Head of caudate nucleus (tissue), 42 donors: ENCODE measurements at regions of chr10 and their contacts with region 1.

Region 1: DNA sequence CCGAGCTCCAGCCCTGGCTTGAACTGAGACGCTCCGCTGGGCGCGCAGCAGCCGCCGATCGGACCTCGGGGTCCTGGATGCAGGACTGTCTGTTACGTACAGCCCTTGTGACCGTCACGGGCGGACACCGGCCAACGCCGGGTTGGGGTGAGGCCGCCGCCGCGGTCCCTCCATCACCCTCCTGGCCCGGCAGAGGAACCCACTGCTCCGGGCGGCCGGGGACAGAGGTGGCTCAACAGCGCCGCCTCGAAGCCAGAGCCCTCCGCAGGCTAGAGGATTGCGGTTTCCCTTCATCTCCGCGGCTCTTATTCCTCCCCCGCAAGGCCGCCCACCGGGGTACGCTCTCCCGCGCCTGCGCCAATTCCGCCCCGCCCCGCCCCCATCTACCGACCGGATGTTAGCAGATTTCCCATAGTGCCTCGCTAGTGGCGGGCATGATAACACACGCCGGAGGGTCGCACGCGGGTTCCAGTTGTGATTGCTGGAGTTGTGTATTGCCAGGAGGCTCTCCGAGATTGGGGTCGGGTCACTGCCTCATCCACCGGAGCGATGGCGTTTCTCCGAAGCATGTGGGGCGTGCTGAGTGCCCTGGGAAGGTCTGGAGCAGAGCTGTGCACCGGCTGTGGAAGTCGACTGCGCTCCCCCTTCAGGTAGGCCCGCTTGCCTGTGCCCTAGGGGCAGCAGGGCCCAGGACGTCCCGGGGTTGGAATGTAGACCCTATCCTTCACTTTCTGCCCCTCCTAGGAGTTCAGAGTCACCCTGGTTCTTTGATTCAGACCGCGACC is at the start of gene TFAM:
- DNase-seq: peak; percentile 89 to 99 (median 95)

Region 2: GRCh38 chr10:58300676-58301075 is 84.5 kb before region 1 on chr10:
- intact Hi-C with region 1: loop called (anchors 5 kb)
- DNase-seq: no peak

Region 3: GRCh38 chr10:58334817-58335305 is 50.3 kb before region 1 on chr10 and contains the start of gene UBE2D1:
- intact Hi-C with region 1: loop called (anchors 10 kb)
- DNase-seq: peak; percentile 85 to 97 (median 94)